ENCODE measurements at regions of chr3 and their contacts with region 1.

Region 1: DNA sequence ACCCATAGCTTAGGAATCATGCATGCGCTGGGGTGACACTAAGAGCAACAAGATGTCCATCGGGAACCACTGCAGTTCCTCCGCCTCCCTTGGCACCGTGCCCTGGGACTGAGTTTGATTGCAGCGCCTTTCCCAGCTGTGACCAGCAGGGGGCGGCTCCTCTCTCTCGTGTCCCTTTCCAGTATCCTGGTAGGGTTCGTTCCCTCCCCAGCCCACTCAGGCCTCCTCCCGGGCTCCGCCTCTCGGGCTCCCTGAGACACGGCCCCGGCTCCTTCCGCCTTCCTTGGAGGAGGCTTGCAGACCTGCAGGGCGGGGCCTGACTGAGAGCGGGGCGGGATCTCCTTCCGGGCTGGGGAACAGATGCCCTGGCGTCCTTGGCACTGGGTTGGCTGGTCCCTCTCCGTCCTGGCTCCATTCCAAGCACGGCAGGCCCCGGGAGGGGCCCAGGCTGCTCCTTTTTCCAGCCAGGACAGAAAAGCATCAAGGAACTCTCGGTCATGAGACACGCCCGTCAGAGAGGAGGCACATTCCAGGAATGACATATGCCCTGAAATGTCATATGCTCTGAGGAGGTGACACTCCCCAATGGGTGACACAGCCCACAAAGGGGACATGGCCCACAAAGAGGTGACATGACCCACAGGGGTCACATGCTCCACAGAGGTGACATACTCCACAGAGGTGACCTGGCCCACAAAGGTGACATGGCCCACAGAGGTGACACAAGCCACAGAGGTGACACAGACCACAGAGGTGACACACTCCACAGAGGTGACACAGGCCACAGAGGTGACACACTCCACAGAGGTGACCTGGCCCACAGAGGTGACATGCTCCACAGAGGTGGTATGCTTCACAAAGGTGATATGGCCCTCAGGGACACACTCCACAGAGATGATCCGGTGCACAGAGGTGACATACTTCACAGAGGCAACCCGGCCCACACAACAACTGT is 79.0 kb downstream of the ABHD5 start:
- DNase-seq: peak; percentile 95 to 99
- H3K4me3 ChIP-seq: peak overlapping the region; percentile 34; the same call in 1 of the 2 replicates
- H3K27ac ChIP-seq: peak overlapping the region; percentile 90
- H3K4me1 ChIP-seq: peaks cover 83% of the 10 kb centered on the region
- H3K27me3 ChIP-seq: no peaks in the 10 kb centered on the region
- CTCF ChIP-seq: peak; percentile 92

Region 2: DNA sequence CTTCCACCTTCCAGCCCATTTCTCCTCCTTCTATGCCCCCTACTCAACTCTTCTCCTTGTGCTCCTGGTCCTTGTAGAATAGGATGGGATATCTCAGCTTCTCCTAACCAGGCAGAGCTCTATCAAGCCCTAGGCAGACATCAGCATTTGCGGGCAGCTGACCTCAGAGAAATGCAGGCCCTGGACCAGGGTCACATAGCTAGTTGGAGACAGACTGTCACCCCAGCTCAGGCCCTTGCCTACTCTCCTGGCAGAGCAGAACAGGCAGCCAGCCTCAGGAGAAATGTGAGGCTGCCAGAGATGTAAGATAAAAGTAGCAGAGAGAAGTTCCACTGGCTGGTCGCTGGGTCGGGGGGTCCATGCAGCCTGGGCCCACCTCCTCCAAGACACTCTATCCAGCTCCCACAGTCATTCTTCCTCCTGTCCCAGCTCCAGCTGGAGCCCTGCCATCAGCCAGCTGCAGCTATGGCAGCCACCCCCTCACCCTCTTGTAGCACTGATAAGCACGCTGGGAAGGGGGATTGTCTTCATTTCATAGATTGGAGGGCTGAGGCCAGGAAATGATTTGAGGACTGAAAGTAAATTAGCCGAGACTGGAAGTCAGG is 898.1 kb before region 1 on chr3:
- CTCF ChIA-PET with region 1: no interaction called
- POLR2A ChIA-PET with region 1: no interaction called
- intact Hi-C with region 1: no loop called
- DNase-seq: no peak
- H3K4me3 ChIP-seq: no peak overlapping the region
- H3K27ac ChIP-seq: no peak overlapping the region
- H3K4me1 ChIP-seq: no peaks in the 10 kb centered on the region
- H3K27me3 ChIP-seq: no peaks in the 10 kb centered on the region
- CTCF ChIP-seq: no peak

Region 3: DNA sequence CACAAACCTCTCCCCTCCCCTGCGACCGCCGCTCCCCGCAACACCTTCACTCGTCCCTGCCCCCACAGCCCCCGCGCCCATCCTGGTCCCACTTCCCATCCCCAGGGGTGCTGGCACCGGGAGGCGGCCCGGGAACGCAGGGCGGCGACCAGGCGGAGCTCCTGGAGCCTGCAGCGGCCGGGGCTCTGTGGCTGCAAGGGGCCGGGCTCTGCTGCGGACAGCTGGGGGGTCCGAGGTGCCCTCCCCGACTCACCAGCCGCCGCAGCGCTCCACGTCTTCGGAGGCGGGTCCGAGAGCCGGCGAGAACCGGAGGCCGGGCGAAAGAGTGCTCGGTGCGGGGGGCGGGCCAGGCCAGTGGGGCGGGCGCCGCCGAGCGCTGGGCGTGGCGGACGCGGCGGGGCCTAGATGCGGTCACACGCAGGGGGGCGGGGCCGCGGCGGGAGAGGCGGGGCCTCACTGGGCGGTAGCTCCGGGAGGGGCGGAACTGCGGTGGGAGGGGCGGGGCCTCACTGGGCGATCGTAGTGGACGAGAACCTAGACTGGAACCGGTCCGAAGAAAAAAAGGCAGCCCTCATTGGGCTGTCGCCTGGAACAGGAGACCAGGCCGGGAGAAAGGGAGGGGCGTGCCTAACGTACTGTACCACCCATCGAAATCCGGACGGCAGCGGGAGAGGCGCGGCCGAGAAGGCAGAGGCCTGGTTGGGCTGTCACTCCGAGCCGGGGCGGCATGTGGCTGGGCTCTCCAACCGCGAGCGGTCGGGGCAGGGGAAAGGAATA is 147.9 kb before region 1 on chr3 and contains the start of gene ANO10:
- CTCF ChIA-PET with region 1: no interaction called
- POLR2A ChIA-PET with region 1: no interaction called
- intact Hi-C with region 1: loop called (anchors 1 kb)
- DNase-seq: peak; percentile 96 to 98
- H3K4me3 ChIP-seq: peak within 1 kb of the TSS; percentile 87
- H3K27ac ChIP-seq: peak within 1 kb of the TSS; percentile 73
- H3K4me1 ChIP-seq: peaks cover 10% of the 10 kb centered on the region
- H3K27me3 ChIP-seq: no peaks in the 10 kb centered on the region
- CTCF ChIP-seq: no peak
- total RNA-seq, gene ANO10: 30.7 and 32.6 TPM in 2 replicates

Region 4: DNA sequence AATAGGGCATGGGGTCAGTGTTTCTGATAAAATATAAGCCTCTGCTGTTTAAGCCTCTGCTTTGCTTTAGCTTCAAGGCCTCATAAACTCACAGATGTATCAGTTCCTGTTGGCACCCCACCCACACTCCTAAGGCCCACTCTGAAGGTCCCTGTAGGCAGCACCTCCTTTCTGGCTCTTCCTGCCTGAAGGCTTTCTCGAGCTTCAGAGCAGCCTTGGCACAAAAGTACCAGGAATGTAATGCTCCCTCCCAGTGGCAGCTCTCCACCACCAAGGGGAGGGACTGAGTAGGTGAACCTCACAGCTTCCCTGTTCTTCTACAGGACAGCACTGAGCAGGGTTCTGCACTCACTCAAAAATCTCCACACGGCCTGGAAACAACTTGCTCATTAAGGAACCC is 23.2 kb after region 1 on chr3:
- CTCF ChIA-PET with region 1: interaction called, 13 read pairs
- POLR2A ChIA-PET with region 1: interaction called, 6 read pairs
- intact Hi-C with region 1: no loop called
- DNase-seq: peak in 1 of 2 experiments; percentile 17
- H3K4me3 ChIP-seq: no peak overlapping the region
- H3K27ac ChIP-seq: no peak overlapping the region
- H3K4me1 ChIP-seq: peaks cover 44% of the 10 kb centered on the region
- H3K27me3 ChIP-seq: no peaks in the 10 kb centered on the region
- CTCF ChIP-seq: no peak

Region 5: DNA sequence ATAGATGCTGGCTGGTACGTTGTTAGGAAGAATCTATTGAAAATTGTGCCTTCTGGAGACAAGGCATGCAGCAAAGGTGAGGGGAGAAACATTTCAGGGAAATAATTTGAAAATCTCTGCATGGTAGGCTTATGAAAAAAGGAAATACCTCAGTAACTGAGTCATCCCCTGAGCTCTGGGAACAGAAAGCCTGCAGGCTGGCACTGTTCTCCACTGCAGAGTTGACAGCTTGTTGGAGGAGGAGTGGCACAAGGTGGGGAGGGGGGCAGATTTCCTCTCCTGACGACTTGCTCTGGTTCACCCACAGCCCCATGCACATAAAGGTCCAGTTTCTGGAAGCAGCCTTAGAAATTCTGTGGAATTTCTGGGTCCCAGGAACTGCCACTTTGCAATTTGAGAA is 100.4 kb after region 1 on chr3:
- CTCF ChIA-PET with region 1: no interaction called
- POLR2A ChIA-PET with region 1: interaction called, 3 read pairs
- intact Hi-C with region 1: loop called (anchors 2 kb)
- DNase-seq: peak; percentile 64 to 89
- H3K4me3 ChIP-seq: peak overlapping the region; percentile 32; the same call in 1 of the 2 replicates
- H3K27ac ChIP-seq: peak overlapping the region; percentile 97
- H3K4me1 ChIP-seq: peaks cover 97% of the 10 kb centered on the region
- H3K27me3 ChIP-seq: no peaks in the 10 kb centered on the region
- CTCF ChIP-seq: no peak

Region 6: GRCh38 chr3:44198284-44199269 is 428.8 kb after region 1 on chr3:
- CTCF ChIA-PET with region 1: no interaction called
- POLR2A ChIA-PET with region 1: interaction called, 6 read pairs
- intact Hi-C with region 1: loop called (anchors 1 kb)
- DNase-seq: peak; percentile 59 to 78
- H3K4me3 ChIP-seq: no peak overlapping the region
- H3K27ac ChIP-seq: no peak overlapping the region
- H3K4me1 ChIP-seq: no peaks in the 10 kb centered on the region
- H3K27me3 ChIP-seq: no peaks in the 10 kb centered on the region
- CTCF ChIP-seq: peak; percentile 79

Region 7: GRCh38 chr3:44235604-44236484 is 466.1 kb after region 1 on chr3:
- CTCF ChIA-PET with region 1: no interaction called
- POLR2A ChIA-PET with region 1: no interaction called
- intact Hi-C with region 1: loop called (anchors 5 kb)
- DNase-seq: peak; percentile 61 to 77
- H3K4me3 ChIP-seq: no peak overlapping the region
- H3K27ac ChIP-seq: no peak overlapping the region
- H3K4me1 ChIP-seq: no peaks in the 10 kb centered on the region
- H3K27me3 ChIP-seq: no peaks in the 10 kb centered on the region
- CTCF ChIP-seq: peak; percentile 78